Sigmoid colon (tissue), 7 donors: ENCODE measurements at regions of chr17 and their contacts with region 1.

Region 1: DNA sequence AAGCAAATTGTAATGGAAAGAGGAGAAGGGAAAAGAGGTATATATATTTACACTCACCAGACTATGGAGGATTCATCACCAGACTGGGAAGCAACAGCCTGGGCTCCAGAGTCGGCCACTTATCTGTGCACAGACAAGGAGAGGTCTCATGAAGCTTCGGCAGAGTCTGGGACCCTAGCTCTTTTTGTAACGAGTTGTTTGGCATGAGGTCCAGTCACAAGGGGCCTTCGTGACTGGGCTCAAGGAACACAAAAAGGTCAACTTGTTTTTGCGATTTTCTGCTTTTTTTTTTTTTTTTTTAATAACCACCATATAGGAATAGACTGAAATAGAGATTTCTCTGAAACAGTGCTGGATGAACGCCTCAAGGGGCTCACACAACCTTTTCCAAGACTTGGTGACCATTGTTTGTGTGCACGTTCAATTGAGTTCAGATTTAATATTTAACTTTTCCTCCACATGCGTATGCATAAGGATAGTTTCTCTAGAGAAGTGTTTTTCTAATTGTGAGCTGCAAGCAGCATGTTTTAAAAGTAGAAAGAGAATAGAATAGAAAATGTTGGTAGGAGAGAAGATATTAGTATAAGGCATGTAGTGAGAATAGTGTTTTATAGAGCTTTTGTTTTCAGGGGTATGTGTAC is 25.8 kb downstream of the BPTF start:
- DNase-seq: no peak
- H3K4me3 ChIP-seq: no peak overlapping the region
- H3K27ac ChIP-seq: no peak overlapping the region
- H3K4me1 ChIP-seq: peaks cover 0 to 34% (median 16%) of the 10 kb centered on the region in 4 donors
- H3K27me3 ChIP-seq: no peaks in the 10 kb centered on the region
- CTCF ChIP-seq: no peak
- EP300 ChIP-seq: no peak
- POLR2A ChIP-seq: no peak

Region 2: DNA sequence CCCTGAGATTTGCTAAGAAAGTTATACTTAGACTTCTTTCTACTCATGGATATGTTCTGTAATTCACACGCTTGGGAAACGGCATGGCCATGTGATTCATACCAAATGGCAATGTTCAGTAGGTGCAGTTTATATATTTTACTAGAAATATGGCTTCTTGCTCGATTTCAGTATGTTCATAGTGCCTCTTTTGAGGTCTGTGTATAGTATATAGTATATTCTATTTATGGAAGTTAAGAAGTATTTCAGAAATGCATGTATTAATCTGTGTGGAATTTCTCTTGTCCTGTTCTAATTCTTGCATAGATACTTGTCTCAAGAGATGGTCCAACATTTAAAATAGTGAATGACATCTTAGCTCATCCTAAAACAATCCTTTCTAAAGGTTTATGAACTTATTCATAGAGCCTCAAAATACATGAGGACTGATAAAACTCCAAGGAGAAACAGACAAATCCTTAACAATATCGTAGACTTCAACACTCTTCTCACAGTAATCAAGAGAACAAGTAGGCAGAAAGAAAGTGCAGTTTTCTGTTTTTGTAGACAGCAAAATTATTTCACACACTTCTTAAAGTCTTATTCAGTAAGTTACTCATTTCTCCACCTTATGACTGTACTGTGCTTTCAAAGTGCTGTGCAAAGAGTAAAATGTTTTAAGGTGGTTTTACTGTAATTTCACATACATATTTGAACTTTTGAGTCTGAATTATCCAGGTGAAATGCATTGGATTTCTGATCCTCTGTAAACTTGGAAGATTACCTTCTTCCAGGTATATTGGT is 14.7 kb before region 1 on chr17:
- intact Hi-C with region 1: loop called (anchors 1 kb)
- DNase-seq: no peak
- H3K4me3 ChIP-seq: no peak overlapping the region
- H3K27ac ChIP-seq: peak overlapping the region in 2 of 4 donors; percentile 7 to 34
- H3K4me1 ChIP-seq: peaks cover 0 to 41% (median 16%) of the 10 kb centered on the region in 4 donors
- H3K27me3 ChIP-seq: no peaks in the 10 kb centered on the region
- CTCF ChIP-seq: no peak
- EP300 ChIP-seq: no peak
- POLR2A ChIP-seq: no peak